Activated CD4-positive, alpha-beta T cell treated with anti-CD3 and anti-CD28 coated beads for 36 hours (primary cell): ENCODE measurements at regions of chr1 and their contacts with region 1.

Region 1: DNA sequence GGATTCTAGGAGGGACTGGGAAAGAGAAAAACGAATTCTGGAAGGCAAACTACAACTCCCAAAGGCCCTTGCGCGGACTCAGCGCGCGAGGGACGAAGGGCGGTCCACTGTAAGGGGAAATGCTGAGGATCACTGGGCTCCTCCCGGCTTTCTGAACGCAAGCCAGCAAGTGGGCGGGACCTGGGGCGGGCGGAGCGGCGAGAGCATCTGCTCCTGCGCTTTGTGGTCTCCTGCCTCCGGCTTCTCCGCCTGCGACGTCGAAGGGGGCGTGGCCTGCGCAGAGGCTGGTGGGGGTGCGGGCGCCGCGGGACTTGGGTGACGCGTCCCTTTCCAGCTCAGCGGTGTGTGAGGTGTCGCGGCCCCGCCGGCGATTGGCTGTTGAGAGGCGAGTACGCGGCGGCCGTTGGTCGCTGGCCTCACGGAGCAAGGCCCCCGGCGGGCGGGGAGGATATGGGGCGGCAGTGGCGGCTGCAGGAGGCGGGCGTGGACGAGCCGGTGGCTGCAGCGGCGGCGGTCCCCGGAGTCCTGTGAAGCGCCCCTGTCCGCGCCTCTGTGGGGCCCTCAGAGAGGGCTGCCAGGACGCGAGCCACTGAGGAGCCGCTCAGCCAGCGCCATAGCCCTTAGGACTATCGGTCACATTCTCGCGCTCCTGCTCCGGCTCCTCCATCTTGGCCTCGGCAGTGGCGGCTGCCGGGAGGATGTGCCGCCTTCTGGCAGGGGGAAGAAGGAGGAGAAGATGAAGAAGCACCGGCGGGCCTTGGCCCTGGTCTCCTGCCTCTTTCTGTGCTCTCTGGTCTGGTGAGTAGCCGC is at the start of gene SUCO:
- DNase-seq: peak; percentile 100
- ATAC-seq: peak; percentile 87
- H3K4me3 Mint-ChIP-seq: peak within 1 kb of the TSS; percentile 87
- H3K27ac Mint-ChIP-seq: peak within 1 kb of the TSS; percentile 100
- H3K4me1 Mint-ChIP-seq: peaks cover 42% of the 10 kb centered on the region
- H3K27me3 Mint-ChIP-seq: peaks cover 2% of the 10 kb centered on the region
- total RNA-seq, gene SUCO: 22.1 to 23.8 TPM

Region 2: GRCh38 chr1:171781176-171781875 is 751.6 kb before region 1 on chr1 and contains the start of gene METTL13:
- CTCF ChIA-PET with region 1: no interaction called
- POLR2A ChIA-PET with region 1: no interaction called
- intact Hi-C with region 1: loop called (anchors 1 kb)
- DNase-seq: peak; percentile 99
- ATAC-seq: peak; percentile 97
- H3K4me3 Mint-ChIP-seq: peak within 1 kb of the TSS; percentile 92
- H3K27ac Mint-ChIP-seq: peak within 1 kb of the TSS; percentile 97
- H3K4me1 Mint-ChIP-seq: peaks cover 57% of the 10 kb centered on the region
- H3K27me3 Mint-ChIP-seq: no peaks in the 10 kb centered on the region
- total RNA-seq, gene METTL13: 41.1 to 52.9 TPM

Region 3: DNA sequence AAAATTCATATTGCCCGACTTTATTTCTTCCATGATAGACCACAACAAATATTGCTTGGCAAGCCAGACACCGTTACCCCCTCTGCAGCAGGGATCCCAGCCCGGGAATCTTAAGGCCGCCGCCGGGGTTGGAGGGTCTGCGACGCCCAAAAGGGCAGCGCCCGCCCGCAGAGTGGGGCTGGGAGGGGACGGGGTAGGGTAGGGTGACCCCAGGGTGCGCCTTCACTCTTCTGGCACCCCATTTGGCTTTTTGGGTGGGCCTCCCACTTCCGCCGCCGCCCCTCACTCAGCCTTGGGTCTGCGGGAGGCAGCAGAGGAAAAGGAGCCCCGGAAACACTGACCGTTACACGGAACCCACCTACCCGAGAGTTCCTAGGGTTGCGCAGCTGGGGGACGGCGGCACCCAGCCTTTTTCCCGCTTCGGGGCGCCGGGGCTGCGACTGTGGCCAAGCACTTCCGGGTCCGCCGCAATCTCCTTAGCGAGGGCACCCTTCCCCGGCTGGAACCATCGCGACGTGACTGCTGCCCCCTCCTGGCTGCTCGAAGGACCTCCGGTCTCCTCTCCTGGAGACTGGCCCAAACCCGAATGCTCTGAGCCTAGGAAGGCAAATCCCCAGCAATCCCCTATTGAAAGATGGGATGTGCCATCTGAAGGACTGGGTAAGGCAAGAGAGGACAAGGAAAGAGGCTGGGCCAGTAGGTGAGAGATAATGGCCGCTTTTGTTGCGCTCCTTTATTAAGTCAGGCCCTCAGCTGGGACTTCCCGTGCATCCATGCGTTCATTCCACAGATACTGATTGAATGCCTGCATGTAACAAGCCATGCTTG is 89.1 kb before region 1 on chr1 and contains the start of gene PIGC:
- CTCF ChIA-PET with region 1: interaction called, 4 read pairs
- POLR2A ChIA-PET with region 1: no interaction called
- intact Hi-C with region 1: loop called in 1 of 2 experiments (anchors 1 kb)
- DNase-seq: peak; percentile 97
- ATAC-seq: peak; percentile 99
- H3K4me3 Mint-ChIP-seq: peak within 1 kb of the TSS; percentile 85
- H3K27ac Mint-ChIP-seq: peak within 1 kb of the TSS; percentile 91
- H3K4me1 Mint-ChIP-seq: peaks cover 31% of the 10 kb centered on the region
- H3K27me3 Mint-ChIP-seq: no peaks in the 10 kb centered on the region
- total RNA-seq, gene PIGC: 14.7 to 17.1 TPM

Region 4: GRCh38 chr1:172588296-172589291 is 55.7 kb after region 1 on chr1:
- CTCF ChIA-PET with region 1: no interaction called
- POLR2A ChIA-PET with region 1: no interaction called
- intact Hi-C with region 1: loop called (anchors 2 to 5 kb)
- DNase-seq: peak; percentile 48
- ATAC-seq: peak; percentile 95
- H3K4me3 Mint-ChIP-seq: no peak overlapping the region
- H3K27ac Mint-ChIP-seq: peak overlapping the region; percentile 28
- H3K4me1 Mint-ChIP-seq: peaks cover 25% of the 10 kb centered on the region
- H3K27me3 Mint-ChIP-seq: no peaks in the 10 kb centered on the region

Region 5: GRCh38 chr1:172699111-172699510 is 166.2 kb after region 1 on chr1:
- CTCF ChIA-PET with region 1: no interaction called
- POLR2A ChIA-PET with region 1: no interaction called
- intact Hi-C with region 1: loop called in 1 of 2 experiments (anchors 1 kb)
- DNase-seq: peak; percentile 82
- ATAC-seq: peak; percentile 80
- H3K4me3 Mint-ChIP-seq: peak overlapping the region; percentile 31
- H3K27ac Mint-ChIP-seq: peak overlapping the region; percentile 97
- H3K4me1 Mint-ChIP-seq: peaks cover 50% of the 10 kb centered on the region
- H3K27me3 Mint-ChIP-seq: peaks cover 4% of the 10 kb centered on the region

Region 6: DNA sequence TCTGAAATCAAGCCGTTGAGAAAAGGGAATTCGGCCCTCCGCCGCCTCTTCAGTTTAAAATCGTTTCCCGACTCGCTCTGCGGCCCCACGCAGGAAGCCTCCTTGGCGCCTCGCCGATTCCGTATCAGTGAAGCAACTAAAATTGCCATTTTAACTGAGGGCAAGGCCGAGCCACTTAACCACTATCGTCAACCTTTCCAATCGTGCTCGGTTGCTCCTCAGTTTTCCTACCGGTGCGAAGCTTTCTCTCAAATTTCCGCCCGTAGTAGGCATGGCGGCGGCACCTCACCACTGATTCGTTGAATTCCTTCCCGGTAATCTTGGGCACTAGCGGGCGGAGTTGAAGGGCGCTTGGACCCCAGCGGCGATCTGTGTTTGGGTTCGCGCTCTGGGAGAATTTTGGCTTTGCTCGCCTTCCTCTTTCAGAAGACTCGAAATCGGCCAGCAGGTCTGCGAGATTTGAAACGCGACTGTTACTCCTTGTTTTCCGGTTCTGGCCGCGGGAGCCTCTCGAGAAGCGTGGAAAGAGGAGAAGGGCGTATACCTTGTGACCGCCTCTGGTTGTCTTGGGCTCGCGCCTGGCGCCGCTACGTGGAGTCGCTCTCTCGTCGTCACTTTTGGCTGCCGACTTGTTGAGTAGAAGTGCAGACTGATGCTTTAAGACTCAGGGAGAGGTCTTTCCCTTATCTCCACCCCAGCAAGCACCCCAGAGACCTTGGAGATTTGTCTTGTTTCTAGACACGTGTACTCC is 1291.6 kb after region 1 on chr1 and contains the starts of genes CENPL and DARS2:
- CTCF ChIA-PET with region 1: no interaction called
- POLR2A ChIA-PET with region 1: no interaction called
- intact Hi-C with region 1: loop called in 1 of 2 experiments (anchors 1 kb)
- DNase-seq: peak; percentile 94
- ATAC-seq: peak; percentile 86
- H3K4me3 Mint-ChIP-seq: peak within 1 kb of the TSS; percentile 94
- H3K27ac Mint-ChIP-seq: peak within 1 kb of the TSS; percentile 99
- H3K4me1 Mint-ChIP-seq: peaks cover 55% of the 10 kb centered on the region
- H3K27me3 Mint-ChIP-seq: no peaks in the 10 kb centered on the region
- total RNA-seq, gene CENPL: 26.1 to 27.2 TPM
- total RNA-seq, gene DARS2: 57.2 to 62.0 TPM

Region 7: DNA sequence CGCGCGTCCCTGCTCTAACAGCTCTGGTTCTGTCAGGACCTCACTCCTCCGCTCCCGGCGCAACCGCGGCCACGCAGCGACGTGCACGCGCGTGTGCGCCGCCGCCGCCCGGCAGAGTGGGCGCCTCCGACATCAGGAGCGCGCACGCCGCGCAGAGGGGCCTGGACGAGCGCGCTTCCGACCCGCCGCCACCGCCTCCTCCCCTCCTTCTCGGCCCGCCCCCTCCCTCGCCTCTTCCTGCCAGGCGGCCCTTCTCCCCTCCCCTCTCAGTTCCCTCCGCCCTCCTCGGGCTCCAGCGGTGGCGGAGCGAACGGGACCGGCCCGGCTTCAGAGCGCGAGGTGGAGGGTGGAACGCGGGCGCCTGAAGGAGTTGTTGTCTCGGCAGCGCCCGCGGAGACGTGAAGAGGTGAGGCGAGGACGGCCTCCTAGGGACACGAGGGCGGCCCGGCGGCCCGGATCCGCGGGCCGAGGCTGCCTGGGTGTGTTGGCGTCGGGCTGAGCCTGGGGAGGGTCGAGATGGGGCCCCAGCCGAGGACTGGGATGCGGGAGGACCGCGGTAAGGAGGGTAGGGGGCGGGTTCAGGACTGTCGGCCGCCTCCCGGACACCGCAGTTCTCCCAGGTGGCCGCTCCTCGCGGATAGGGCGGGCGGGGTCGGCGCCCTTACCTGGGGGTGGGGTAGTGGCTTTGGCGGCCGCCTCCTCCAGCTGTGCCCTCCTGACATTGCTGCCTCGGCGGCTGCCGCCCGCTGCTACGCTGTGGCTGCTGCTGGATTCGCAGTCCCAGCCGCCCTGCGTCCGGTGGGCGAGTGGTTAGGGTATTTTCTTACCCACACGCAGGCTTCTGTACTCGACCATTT is 1626.6 kb after region 1 on chr1 and contains the start of gene RABGAP1L:
- CTCF ChIA-PET with region 1: no interaction called
- POLR2A ChIA-PET with region 1: no interaction called
- intact Hi-C with region 1: loop called in 1 of 2 experiments (anchors 2 kb)
- DNase-seq: peak; percentile 97
- ATAC-seq: peak; percentile 83
- H3K4me3 Mint-ChIP-seq: peak within 1 kb of the TSS; percentile 93
- H3K27ac Mint-ChIP-seq: peak within 1 kb of the TSS; percentile 95
- H3K4me1 Mint-ChIP-seq: peaks cover 59% of the 10 kb centered on the region
- H3K27me3 Mint-ChIP-seq: no peaks in the 10 kb centered on the region
- total RNA-seq, gene RABGAP1L: 22.6 to 29.9 TPM